Left lung (tissue), 14 donors: ENCODE measurements at regions of chr7 and their contacts with region 1.

Region 1: DNA sequence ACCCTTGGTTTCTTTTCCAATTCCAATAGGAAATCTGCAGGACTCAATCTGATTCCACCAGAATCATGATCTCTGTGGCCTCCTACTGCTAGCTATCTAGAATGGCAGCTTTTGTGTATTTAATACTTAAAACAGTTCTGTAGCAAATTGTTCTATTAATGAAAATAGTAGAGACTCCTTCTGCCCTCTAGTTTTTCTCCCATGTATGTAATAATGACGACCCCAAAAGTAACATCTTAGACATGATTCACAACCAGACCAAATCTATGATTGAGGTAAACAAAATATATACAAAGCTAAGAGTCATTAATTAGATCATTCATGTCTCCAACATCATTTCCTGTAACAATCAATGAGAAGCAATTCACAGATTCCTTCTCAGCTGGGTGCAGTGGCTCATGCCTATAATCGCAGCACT is 259.1 kb upstream of the MKLN1 start:
- DNase-seq: no peak
- ATAC-seq: peak; percentile 14
- H3K4me3 ChIP-seq: no peak overlapping the region
- H3K27ac ChIP-seq: peak overlapping the region in 1 of 2 donors; percentile 39
- H3K4me1 ChIP-seq: peaks cover 10 to 63% of the 10 kb centered on the region in 2 donors
- H3K27me3 ChIP-seq: no peaks in the 10 kb centered on the region
- CTCF ChIP-seq: no peak

Region 2: DNA sequence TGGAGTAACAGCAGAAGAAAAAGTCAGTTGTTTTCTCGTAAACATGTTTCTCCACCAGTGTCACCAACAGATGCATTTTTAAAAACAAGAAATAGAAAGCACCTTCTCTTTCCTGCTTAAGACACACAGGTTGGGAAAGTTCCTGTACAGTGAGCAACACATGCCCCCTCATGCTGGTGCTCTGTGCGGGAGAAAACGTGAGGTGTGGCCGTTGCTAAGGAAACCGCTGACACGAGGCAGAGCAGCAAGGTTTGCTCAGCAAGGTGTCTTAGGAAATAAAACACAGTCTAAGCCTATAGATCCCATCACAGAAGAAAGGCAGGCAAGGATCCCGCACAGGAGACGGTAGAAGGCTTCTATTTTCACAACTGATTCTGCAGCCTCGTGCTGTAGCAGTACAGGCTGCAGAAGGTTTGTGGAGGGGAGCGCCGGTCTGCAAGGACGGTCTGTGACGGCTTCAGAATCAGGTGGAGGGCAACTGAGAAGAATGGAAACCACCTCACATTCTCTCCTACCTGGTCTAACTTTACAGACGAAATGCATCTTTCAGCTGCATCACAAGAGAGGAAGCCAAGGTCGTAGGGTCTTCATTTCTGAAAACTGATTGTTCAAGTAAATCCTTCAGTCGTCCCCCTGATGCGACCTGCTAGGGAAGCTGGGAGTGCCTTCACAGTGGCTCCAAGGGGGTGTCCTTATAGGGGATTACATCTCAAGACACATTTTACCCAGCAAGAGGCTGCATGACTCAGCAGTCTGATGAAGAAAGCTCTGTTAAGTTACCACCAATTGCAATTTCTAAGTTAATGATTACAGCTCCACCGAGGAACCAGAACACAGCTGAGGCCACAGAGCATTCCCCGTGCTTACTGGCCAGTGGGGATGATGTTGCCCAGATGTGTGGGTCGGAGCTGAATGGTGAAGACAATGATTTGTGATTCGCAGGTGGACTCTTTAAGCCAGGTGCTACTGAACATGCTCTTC is 183.9 kb before region 1 on chr7:
- intact Hi-C with region 1: no loop called
- DNase-seq: no peak
- ATAC-seq: peak; percentile 22
- H3K4me3 ChIP-seq: no peak overlapping the region
- H3K27ac ChIP-seq: peak overlapping the region; percentile 27 to 68
- H3K4me1 ChIP-seq: peaks cover 33 to 84% of the 10 kb centered on the region in 2 donors
- H3K27me3 ChIP-seq: no peaks in the 10 kb centered on the region
- CTCF ChIP-seq: no peak

Region 3: DNA sequence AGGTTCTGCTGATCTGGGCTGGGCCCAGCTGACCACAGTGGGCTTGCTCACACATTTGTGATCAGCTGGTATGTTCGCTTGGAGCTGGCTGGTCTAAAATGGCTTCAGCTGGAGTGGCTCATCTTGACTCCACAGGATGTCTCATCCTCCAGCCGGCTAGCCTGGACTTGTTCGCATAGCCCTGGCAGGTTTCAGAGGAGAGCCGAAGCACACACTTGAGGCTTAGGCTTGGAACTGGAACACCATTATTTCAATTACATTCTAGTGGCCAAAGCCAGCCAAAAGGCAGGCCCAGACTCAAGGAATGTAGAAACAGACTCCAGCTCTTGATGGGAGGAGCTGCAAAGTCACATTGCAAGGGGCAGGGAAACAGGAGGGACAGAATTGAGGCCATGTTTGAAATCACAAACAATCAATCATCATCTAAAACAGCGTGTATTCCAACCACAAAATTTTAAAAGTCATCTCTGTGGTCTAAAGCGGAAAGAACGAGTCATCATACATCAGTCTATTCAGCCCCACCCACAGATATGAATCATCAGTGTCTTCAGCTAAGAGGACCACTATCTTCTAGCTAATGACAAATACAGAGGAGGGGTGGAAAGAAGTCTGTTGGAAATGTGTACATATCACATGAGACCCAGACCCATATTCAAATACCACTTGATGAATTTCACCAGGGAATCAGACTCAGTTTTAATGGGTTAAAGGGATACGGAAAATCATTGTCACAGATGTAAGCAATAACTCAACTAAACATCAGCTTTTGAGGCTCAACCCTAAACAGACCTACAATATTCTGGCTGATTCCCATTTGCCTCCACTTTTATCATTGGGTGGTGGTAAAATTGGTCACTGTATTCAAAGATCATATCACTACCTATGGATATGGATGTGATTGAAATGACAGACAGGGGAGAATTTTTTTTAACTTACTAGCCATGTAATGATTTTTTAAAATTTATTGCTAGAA is 120.0 kb after region 1 on chr7:
- intact Hi-C with region 1: no loop called
- DNase-seq: peak in 1 of 4 donors; percentile 54
- ATAC-seq: peak; percentile 66
- H3K4me3 ChIP-seq: no peak overlapping the region
- H3K27ac ChIP-seq: peak overlapping the region; percentile 19 to 35
- H3K4me1 ChIP-seq: peaks cover 0 to 21% of the 10 kb centered on the region in 2 donors
- H3K27me3 ChIP-seq: peaks cover 0 to 4% of the 10 kb centered on the region in 2 donors
- CTCF ChIP-seq: no peak

Region 4: GRCh38 chr7:131302876-131303707 is 234.5 kb after region 1 on chr7:
- intact Hi-C with region 1: loop called in 1 of 2 experiments (anchors 10 kb)
- DNase-seq: no peak
- ATAC-seq: peak; percentile 92
- H3K4me3 ChIP-seq: no peak overlapping the region
- H3K27ac ChIP-seq: no peak overlapping the region
- H3K4me1 ChIP-seq: no peaks in the 10 kb centered on the region
- H3K27me3 ChIP-seq: no peaks in the 10 kb centered on the region
- CTCF ChIP-seq: peak; percentile 31 to 36